GM10248 (cell line): ENCODE measurements at regions of chr15 and their contacts with region 1.

Region 1: DNA sequence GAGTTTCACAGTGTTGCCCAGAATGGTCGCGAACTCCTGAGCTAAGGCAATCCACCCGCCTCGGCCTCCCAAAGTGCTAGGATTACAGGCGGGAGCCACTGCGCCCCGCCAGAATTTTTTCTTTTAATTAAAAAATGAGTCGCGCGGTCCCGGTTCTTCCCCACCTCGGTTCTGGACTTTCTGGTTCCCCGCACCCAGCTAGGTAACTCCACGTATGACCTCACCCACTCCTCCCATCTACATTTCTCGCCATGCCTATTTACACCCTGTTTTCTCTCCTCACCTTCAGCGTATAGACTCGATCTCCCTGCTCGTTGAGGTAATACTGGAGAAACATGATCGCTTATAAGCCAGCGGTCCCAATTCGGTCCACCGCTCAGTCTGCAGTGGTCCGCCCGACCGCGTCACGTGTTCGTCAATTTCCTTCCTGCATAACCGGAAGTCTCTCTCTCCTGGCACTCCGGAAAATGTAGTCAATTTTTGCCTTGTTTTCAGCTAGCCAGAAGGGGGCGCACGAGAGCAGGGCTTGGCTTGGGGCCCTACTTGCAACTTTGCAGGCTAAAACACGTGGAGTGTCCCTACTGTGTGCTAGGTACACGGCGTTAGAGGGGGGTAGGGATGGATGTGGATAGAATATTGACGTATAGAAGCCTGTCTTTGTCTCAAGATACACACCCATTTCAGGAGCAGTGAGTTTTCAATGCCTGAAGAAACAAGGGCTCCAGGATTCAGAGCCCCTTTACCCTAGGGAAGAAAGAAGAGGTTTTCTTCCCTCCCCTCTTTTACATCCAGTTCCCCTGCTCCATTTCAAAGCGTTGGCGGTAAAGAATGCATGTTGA is at the starts of genes NOP10 and NUTM1:
- DNase-seq: peak; percentile 82
- CTCF ChIP-seq: peak; percentile 94

Region 2: GRCh38 chr15:34223904-34224596 is 118.9 kb before region 1 on chr15:
- CTCF ChIA-PET with region 1: no interaction called
- POLR2A ChIA-PET with region 1: no interaction called
- DNase-seq: peak; percentile 31
- CTCF ChIP-seq: no peak

Region 3: GRCh38 chr15:34324933-34325332 is 18.0 kb before region 1 on chr15:
- CTCF ChIA-PET with region 1: interaction called, 19 read pairs
- POLR2A ChIA-PET with region 1: interaction called, 9 read pairs
- DNase-seq: no peak
- CTCF ChIP-seq: no peak

Region 4: DNA sequence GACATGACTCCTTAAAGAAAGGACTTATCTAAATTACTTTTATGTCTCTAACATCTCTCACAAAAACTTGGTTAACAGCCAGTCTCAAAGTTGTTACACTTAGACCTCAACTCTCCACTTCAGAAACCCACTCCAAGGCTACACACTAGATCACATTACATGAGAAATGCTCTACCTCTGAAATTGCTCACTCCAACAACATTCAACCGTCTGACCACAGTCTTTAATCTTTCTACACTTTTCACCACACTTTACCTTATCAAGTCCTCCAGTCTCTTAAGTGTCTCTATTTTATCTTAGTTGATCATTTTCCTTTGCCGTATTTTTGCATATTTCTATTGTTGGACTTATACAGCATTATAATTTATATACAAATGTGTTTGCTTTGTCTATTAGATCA is 11.1 kb before region 1 on chr15:
- CTCF ChIA-PET with region 1: interaction called, 19 read pairs
- POLR2A ChIA-PET with region 1: interaction called, 9 read pairs
- DNase-seq: no peak
- CTCF ChIP-seq: no peak

Region 5: DNA sequence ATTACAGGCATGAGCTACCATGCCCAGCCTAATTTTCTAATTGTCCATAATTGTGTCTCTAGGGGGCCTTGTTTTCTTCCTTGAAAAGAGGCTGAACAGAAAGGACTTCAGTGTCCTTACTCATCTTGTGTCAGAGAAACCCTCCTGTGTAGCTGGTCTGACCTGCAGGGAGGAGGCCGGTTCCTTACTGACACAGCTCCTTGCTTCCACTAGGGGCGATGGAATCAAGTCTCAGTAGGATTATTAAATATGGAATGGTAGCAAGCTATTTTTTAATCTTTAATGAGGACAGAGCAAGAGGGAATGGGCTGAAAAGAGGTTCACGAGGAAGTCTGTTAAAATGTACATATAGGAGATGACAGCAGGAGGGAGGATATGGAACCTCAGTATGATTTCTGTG is 15.4 kb after region 1 on chr15:
- CTCF ChIA-PET with region 1: interaction called, 27 read pairs
- POLR2A ChIA-PET with region 1: interaction called, 5 read pairs
- DNase-seq: no peak
- CTCF ChIP-seq: no peak